AG04450 (cell line): ENCODE measurements at regions of chr9 and their contacts with region 1.

Region 1: GRCh38 chr9:99962680-99963261 is 56.3 kb downstream of the STX17 start:
- DNase-seq: no peak
- H3K4me3 ChIP-seq: no peak overlapping the region
- H3K27ac ChIP-seq: no peak overlapping the region
- H3K27me3 ChIP-seq: no peaks in the 10 kb centered on the region
- CTCF ChIP-seq: no peak

Region 2: GRCh38 chr9:99948896-99949295 is 13.9 kb before region 1 on chr9:
- CTCF ChIA-PET with region 1: interaction called, 11 read pairs
- POLR2A ChIA-PET with region 1: no interaction called
- DNase-seq: no peak
- H3K4me3 ChIP-seq: no peak overlapping the region
- H3K27ac ChIP-seq: no peak overlapping the region
- H3K27me3 ChIP-seq: no peaks in the 10 kb centered on the region
- CTCF ChIP-seq: no peak

Region 3: GRCh38 chr9:99980598-99980997 is 17.8 kb after region 1 on chr9:
- CTCF ChIA-PET with region 1: no interaction called
- POLR2A ChIA-PET with region 1: no interaction called
- DNase-seq: no peak
- H3K4me3 ChIP-seq: no peak overlapping the region
- H3K27ac ChIP-seq: no peak overlapping the region
- H3K27me3 ChIP-seq: no peaks in the 10 kb centered on the region
- CTCF ChIP-seq: no peak